SK-N-SH (cell line): ENCODE measurements at regions of chr7 and their contacts with region 1.

Region 1: DNA sequence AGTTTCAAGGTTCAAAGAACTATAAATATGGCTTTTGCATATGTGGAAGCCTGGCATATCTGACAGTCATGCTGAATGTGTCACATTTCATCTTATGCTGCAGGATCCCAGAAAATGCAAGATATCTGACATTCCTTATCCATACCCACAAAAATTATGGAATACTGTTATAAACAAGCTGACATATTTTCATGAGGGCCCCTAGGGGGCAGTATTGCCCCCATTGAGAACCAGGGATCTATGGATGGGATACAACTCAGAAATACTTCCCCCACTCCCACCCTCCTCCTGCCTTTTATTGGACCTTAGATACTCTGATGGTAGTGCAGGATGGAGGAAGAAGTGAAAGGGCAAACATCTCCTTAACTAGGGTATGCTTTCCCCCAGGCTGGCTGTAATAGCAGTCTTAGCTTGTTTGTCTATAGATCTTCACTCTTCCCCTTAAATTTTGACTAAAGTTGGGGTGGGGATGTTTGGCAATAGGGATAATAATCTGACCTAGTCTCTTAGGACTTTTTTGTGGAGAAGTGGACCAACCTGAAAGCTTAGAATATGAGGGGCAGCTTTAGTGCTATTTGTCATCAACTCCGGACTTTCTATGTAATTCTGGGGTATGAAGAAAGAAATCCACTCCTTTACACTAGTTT is 3.5 kb upstream of the GNGT1 start:
- DNase-seq: peak; percentile 55
- H3K4me3 ChIP-seq: no peak overlapping the region
- H3K27ac ChIP-seq: no peak overlapping the region
- H3K4me1 ChIP-seq: no peaks in the 10 kb centered on the region
- H3K27me3 ChIP-seq: no peaks in the 10 kb centered on the region
- CTCF ChIP-seq: peak; percentile 99
- EP300 ChIP-seq: no peak
- RAD21 ChIP-seq: peak; percentile 88

Region 2: GRCh38 chr7:93843260-93843659 is 59.6 kb before region 1 on chr7:
- CTCF ChIA-PET with region 1: no interaction called
- POLR2A ChIA-PET with region 1: no interaction called
- DNase-seq: no peak
- H3K4me3 ChIP-seq: no peak overlapping the region
- H3K27ac ChIP-seq: peak overlapping the region in 1 of 2 experiments; percentile 22; a peak in 1 of 4 replicates
- H3K4me1 ChIP-seq: peaks cover 0 to 16% of the 10 kb centered on the region in 2 experiments; a peak in 2 of 4 replicates
- H3K27me3 ChIP-seq: no peaks in the 10 kb centered on the region
- CTCF ChIP-seq: no peak
- EP300 ChIP-seq: peak in 1 of 2 experiments; percentile 24; a peak in 1 of 4 replicates
- RAD21 ChIP-seq: no peak

Region 3: GRCh38 chr7:93890464-93891068 is 12.3 kb before region 1 on chr7 and contains the start of gene TFPI2:
- CTCF ChIA-PET with region 1: interaction called, 38 read pairs
- POLR2A ChIA-PET with region 1: interaction called, 5 read pairs
- DNase-seq: peak; percentile 83
- H3K4me3 ChIP-seq: peak within 1 kb of the TSS; percentile 79 to 80
- H3K27ac ChIP-seq: peak within 1 kb of the TSS in 1 of 2 experiments; percentile 53; a peak in 1 of 4 replicates
- H3K4me1 ChIP-seq: peaks cover 0 to 12% of the 10 kb centered on the region in 2 experiments; a peak in 2 of 4 replicates
- H3K27me3 ChIP-seq: no peaks in the 10 kb centered on the region
- CTCF ChIP-seq: no peak
- EP300 ChIP-seq: no peak
- RAD21 ChIP-seq: peak; percentile 46
- polyA plus RNA-seq, gene TFPI2: 16.9 and 17.7 TPM in 2 replicates

Region 4: DNA sequence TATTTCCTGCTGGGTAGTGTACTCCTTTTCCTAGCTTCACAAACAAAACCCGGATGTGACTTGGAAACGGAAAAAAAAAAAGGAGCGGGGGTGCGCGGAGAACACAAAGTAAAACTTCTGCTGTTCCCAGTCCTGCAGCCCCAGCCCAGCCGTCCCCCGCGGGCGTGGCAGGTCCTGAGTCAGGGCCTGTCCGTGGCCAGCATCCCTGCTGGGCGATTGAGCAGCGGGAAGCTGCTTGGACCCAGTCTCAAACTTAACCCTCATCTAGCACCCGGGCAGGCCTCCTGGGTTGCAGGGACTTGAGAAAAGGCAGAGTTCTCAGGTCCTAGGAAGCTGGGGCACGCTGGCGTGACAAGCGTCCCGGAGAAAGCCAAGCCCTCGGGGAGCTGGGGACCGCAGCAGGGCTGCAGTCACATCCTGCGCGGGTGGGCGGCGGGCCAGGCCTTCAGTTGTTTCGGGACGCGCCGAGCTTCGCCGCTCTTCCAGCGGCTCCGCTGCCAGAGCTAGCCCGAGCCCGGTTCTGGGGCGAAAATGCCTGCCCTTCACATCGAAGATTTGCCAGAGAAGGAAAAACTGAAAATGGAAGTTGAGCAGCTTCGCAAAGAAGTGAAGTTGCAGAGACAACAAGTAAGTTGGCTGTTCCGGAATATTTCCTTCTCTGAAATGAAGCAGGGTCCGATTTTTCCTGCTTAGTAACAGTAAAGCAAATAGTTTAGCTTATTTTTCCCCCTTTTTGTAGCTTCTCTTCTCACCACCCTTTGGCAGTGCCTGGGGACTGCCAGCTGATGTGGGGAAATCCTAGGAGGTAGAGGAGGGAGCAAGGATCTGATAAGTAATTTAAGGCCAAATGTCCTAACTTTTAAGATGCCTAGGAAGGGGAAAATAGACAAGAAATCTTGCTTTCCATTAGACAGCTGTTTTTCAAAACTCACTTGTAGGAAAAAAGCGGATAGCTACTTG is 19.0 kb after region 1 on chr7 and contains the start of gene GNG11:
- CTCF ChIA-PET with region 1: interaction called, 17 read pairs
- POLR2A ChIA-PET with region 1: interaction called, 3 read pairs
- DNase-seq: peak; percentile 86
- H3K4me3 ChIP-seq: peak within 1 kb of the TSS; percentile 69 to 79
- H3K27ac ChIP-seq: peak within 1 kb of the TSS; percentile 78 to 98
- H3K4me1 ChIP-seq: peaks cover 14 to 25% of the 10 kb centered on the region in 2 experiments; a peak in 3 of 4 replicates
- H3K27me3 ChIP-seq: no peaks in the 10 kb centered on the region
- CTCF ChIP-seq: no peak
- EP300 ChIP-seq: 0 out of 4 replicates have a peak, but pooled peaks of 1 of the 2 experiments have one; percentile 32
- RAD21 ChIP-seq: peak; percentile 54
- polyA plus RNA-seq, gene GNG11: 9.8 and 11.5 TPM in 2 replicates

Region 5: DNA sequence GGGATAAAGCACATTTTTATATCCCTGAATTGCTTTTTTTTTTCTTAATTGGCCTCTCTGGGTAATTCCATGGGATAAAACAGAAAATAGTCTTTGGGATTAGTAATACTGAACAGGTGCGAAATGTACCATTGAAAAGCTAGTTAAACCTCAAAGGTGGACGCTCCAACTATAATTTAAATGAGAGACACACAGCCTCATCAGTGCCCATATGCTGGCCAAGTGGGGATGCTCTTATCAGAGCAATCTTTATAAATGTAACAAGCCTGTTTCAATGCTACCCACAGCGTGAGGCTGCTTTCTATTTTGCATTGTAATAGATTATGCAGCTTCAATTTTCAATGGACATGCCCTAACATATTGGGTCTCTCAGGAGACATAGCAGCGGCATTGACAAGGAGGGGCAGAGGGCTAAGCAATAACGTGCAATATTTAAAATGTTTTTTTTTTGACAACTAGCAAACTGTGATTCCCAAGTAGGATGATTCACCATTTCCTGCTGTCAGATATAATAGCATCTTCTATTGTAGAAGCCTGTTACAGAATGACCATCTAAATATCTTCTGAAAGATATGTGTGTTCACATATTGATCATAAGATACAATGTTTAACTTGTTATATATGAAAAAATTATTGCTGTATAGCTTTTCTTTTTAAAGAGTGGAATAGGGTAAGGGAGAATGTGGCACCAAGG is 192.6 kb after region 1 on chr7:
- CTCF ChIA-PET with region 1: interaction called, 12 read pairs
- POLR2A ChIA-PET with region 1: no interaction called
- DNase-seq: no peak
- H3K4me3 ChIP-seq: no peak overlapping the region
- H3K27ac ChIP-seq: peak overlapping the region; percentile 47 to 52; a peak in 3 of 4 replicates
- H3K4me1 ChIP-seq: peaks cover 4 to 6% of the 10 kb centered on the region in 2 experiments; a peak in 3 of 4 replicates
- H3K27me3 ChIP-seq: no peaks in the 10 kb centered on the region
- CTCF ChIP-seq: no peak
- EP300 ChIP-seq: peak; percentile 19 to 77; a peak in 2 of 4 replicates
- RAD21 ChIP-seq: no peak

Region 6: GRCh38 chr7:94529516-94529915 is 626.6 kb after region 1 on chr7:
- CTCF ChIA-PET with region 1: no interaction called
- POLR2A ChIA-PET with region 1: no interaction called
- DNase-seq: no peak
- H3K4me3 ChIP-seq: no peak overlapping the region
- H3K27ac ChIP-seq: no peak overlapping the region
- H3K4me1 ChIP-seq: no peaks in the 10 kb centered on the region; a peak in 1 of 4 replicates
- H3K27me3 ChIP-seq: no peaks in the 10 kb centered on the region
- CTCF ChIP-seq: no peak
- EP300 ChIP-seq: no peak
- RAD21 ChIP-seq: no peak